ENCODE measurements at regions of chr22 and their contacts with region 1.

Region 1: GRCh38 chr22:20858615-20859416 is at the starts of genes PI4KA and SNAP29:
- DNase-seq: peak; percentile 100
- total RNA-seq, gene PI4KA: 52.6 TPM
- total RNA-seq, gene SNAP29: 23.6 TPM

Region 2: DNA sequence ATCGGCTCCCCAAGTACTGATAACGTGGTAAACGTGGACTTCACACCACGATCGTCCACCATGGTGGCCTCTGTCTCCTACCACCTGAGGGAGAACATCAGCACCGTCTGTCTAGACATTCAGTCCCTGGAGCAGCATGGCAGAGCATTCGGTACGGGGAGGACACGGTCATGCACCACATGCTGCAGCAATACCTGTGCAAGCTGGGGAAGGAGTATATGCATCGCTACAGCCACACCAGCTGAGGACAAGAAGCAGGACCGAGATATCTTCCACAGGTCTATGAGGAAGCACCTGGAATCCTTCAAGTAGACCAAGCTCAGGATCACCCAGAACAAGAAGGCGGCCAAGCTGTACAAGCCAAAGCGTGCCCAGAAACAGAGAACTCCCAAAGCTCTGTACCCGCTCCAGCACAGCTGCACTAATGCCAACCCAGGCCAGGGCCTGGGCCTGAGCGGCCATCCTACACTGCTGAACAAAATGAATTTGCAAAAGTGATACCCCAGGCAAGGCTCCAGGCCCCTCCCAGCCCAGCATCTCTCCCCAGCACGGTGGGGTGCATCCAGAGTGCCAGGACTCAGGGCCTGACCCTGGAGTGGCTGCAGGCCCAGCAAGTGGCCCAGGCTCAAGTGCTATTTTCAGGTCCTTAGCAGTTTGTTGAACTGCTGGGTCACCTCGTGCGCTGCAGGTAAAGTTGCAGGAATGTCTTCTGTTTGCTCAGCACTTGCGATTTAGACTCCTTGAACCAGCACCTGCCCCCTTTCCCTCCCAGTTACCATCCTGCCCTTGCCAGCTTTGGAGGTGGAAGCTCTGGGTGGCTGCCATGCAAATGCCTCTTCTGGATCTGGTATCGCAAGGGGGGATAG is 204.2 kb before region 1 on chr22:
- intact Hi-C with region 1: no loop called
- DNase-seq: no peak

Region 3: GRCh38 chr22:20916983-20917810 is 58.4 kb after region 1 on chr22 and contains the start of gene CRKL:
- intact Hi-C with region 1: loop called (anchors 5 kb)
- DNase-seq: peak; percentile 99
- total RNA-seq, gene CRKL: 55.5 TPM

Region 4: GRCh38 chr22:20981787-20982562 is 123.2 kb after region 1 on chr22 and contains the start of gene LZTR1:
- intact Hi-C with region 1: loop called (anchors 5 kb)
- DNase-seq: peak; percentile 95
- total RNA-seq, gene LZTR1: 33.0 TPM

Region 5: GRCh38 chr22:21001560-21002325 is 142.9 kb after region 1 on chr22 and contains the start of gene THAP7:
- intact Hi-C with region 1: loop called (anchors 1 kb)
- DNase-seq: peak; percentile 97
- total RNA-seq, gene THAP7: 18.2 TPM

Measured in cardiac septum (tissue), 1 donor.